ENCODE measurements at regions of chr15 and their contacts with region 1.

Region 1: DNA sequence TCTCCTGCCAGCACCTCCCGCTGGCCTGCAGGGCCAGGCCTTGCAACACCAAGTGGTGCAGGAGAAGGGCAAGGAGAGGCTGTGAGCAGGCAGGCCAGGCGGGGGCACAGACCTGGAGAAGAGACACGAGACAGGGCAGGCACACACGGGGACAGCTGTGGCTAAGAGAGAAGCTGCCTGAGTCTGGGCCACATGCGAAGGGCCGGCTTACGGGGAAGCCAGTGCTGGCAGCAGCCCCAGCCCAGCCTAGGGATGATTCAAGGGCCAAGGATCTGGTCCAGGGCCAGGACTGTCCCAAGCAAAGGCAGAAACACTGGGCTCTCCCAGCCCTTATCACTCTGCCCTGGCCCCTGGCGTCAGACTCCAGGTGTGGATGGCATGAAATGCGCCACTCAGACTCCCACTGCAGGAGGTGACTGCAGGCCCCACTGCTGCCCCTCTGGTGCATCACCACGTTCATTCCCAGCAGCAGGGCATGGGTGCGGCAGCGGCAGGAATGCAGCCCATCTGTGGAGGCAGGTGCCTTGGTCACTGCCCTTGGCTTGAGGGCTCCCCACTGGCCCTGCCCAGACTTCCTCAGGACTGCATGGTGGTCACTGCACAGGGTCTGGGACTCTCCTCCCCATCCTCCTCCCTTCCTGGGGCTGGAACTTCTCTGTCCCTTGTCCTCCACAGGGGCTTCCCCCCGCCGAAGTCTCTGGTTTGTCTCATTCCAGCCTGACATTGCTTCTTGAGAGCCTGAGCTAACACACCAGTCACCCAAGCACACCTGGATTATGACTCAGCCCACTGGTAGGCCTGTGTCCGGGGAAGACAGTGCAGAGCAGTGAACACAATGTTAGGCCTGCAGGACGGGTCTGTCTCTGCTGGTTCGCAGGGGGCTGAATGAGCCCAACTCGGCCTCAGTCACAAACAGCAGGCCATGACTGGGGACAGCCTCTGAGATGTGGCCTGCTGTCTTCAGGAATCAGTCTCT is 69.3 kb downstream of the TBC1D2B start:
- DNase-seq: peak; percentile 93 to 98
- ATAC-seq: peak; percentile 59 to 71
- H3K4me3 ChIP-seq: no peak overlapping the region
- H3K27ac ChIP-seq: peak overlapping the region; percentile 81 to 93 (median 90)
- H3K4me1 ChIP-seq: peaks cover 57 to 59% of the 10 kb centered on the region in 2 donors
- H3K27me3 ChIP-seq: no peaks in the 10 kb centered on the region
- CTCF ChIP-seq: peak in 1 of 5 experiments; percentile 12
- POLR2A ChIP-seq: no peak

Region 2: GRCh38 chr15:77992356-77993222 is 15.6 kb before region 1 on chr15:
- in situ Hi-C with region 1: no loop called
- intact Hi-C with region 1: loop called (anchors 2 kb)
- DNase-seq: peak in 1 of 2 donors; percentile 57
- ATAC-seq: peak; percentile 9 to 29
- H3K4me3 ChIP-seq: no peak overlapping the region
- H3K27ac ChIP-seq: peak overlapping the region; percentile 87 to 95 (median 90)
- H3K4me1 ChIP-seq: peaks cover 51 to 54% of the 10 kb centered on the region in 2 donors
- H3K27me3 ChIP-seq: no peaks in the 10 kb centered on the region
- CTCF ChIP-seq: no peak
- POLR2A ChIP-seq: no peak

Measured in gastrocnemius medialis (tissue), 4 donors.